ENCODE measurements at regions of chr17 and their contacts with region 1.

Region 1: DNA sequence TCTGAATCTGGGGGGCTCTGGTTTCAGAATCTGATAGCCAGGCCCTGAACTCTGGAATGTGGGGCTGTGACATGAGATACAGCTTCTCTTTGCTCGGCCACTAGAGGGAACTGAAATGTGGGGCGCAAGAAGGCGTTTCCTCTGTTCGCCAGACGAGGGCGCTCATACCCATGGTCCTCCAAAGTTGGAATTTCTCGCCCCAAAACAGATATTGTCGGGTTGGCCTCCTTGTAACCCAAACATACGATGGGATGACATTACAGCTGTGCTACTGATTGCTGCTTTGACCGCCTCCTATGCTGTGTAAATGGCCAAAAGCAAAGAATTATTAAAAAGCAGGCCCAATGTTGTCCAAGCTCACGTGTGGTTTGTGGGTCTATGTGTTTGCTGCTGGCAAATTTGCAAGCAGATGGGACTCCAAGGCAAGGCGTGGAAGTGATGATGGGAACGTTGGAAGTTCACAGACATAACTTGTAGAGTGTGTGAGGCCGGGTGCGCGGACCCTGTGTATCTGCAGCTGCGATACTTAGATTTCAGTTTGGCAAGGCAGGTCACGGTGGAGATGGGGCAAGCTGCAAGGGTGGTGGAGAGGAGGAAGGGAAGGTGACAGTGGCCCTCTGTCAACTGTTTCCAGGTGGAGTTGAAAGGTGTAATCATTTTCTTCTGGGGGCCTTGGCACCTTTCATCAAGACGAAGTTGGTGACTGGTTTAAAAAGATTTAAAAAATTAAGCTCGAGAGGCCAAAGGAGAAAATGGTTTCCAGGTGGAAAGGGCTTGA is 13.0 kb upstream of the MSI2 start:
- DNase-seq: peak; percentile 63 to 89 (median 70)
- ATAC-seq: peak; percentile 98
- H3K4me3 ChIP-seq: no peak overlapping the region
- H3K4me3 Mint-ChIP-seq: no peak overlapping the region
- H3K27ac ChIP-seq: no peak overlapping the region
- H3K27ac Mint-ChIP-seq: no peak overlapping the region
- H3K4me1 ChIP-seq: peaks cover 4% of the 10 kb centered on the region
- H3K4me1 Mint-ChIP-seq: no peaks in the 10 kb centered on the region
- H3K27me3 ChIP-seq: no peaks in the 10 kb centered on the region
- H3K27me3 Mint-ChIP-seq: peaks cover 4% of the 10 kb centered on the region
- CTCF ChIP-seq: peak; percentile 99

Region 2: GRCh38 chr17:57080441-57081080 is 162.8 kb before region 1 on chr17:
- CTCF ChIA-PET with region 1: no interaction called
- POLR2A ChIA-PET with region 1: no interaction called
- intact Hi-C with region 1: no loop called
- DNase-seq: no peak
- ATAC-seq: no peak
- H3K4me3 ChIP-seq: no peak overlapping the region
- H3K4me3 Mint-ChIP-seq: no peak overlapping the region
- H3K27ac ChIP-seq: no peak overlapping the region
- H3K27ac Mint-ChIP-seq: no peak overlapping the region
- H3K4me1 ChIP-seq: peaks cover 8% of the 10 kb centered on the region
- H3K4me1 Mint-ChIP-seq: peaks cover 5% of the 10 kb centered on the region
- H3K27me3 ChIP-seq: no peaks in the 10 kb centered on the region
- H3K27me3 Mint-ChIP-seq: no peaks in the 10 kb centered on the region
- CTCF ChIP-seq: no peak

Region 3: GRCh38 chr17:57158296-57158695 is 85.1 kb before region 1 on chr17:
- CTCF ChIA-PET with region 1: no interaction called
- POLR2A ChIA-PET with region 1: no interaction called
- intact Hi-C with region 1: no loop called
- DNase-seq: no peak
- ATAC-seq: no peak
- H3K4me3 ChIP-seq: no peak overlapping the region
- H3K4me3 Mint-ChIP-seq: no peak overlapping the region
- H3K27ac ChIP-seq: no peak overlapping the region
- H3K27ac Mint-ChIP-seq: no peak overlapping the region
- H3K4me1 ChIP-seq: no peaks in the 10 kb centered on the region
- H3K4me1 Mint-ChIP-seq: no peaks in the 10 kb centered on the region
- H3K27me3 ChIP-seq: no peaks in the 10 kb centered on the region
- H3K27me3 Mint-ChIP-seq: peaks cover 6% of the 10 kb centered on the region
- CTCF ChIP-seq: no peak

Region 4: GRCh38 chr17:57270801-57271245 is 27.5 kb after region 1 on chr17:
- CTCF ChIA-PET with region 1: interaction called, 10 read pairs
- POLR2A ChIA-PET with region 1: no interaction called
- intact Hi-C with region 1: no loop called
- DNase-seq: no peak
- ATAC-seq: no peak
- H3K4me3 ChIP-seq: no peak overlapping the region
- H3K4me3 Mint-ChIP-seq: no peak overlapping the region
- H3K27ac ChIP-seq: no peak overlapping the region
- H3K27ac Mint-ChIP-seq: no peak overlapping the region
- H3K4me1 ChIP-seq: peaks cover 11% of the 10 kb centered on the region
- H3K4me1 Mint-ChIP-seq: peaks cover 54% of the 10 kb centered on the region
- H3K27me3 ChIP-seq: no peaks in the 10 kb centered on the region
- H3K27me3 Mint-ChIP-seq: no peaks in the 10 kb centered on the region
- CTCF ChIP-seq: no peak

Region 5: GRCh38 chr17:57294629-57295535 is 51.5 kb after region 1 on chr17:
- CTCF ChIA-PET with region 1: interaction called, 12 read pairs
- POLR2A ChIA-PET with region 1: no interaction called
- intact Hi-C with region 1: no loop called
- DNase-seq: peak in 13 of 14 experiments; percentile 10 to 66 (median 41)
- ATAC-seq: peak; percentile 90
- H3K4me3 ChIP-seq: no peak overlapping the region
- H3K4me3 Mint-ChIP-seq: no peak overlapping the region
- H3K27ac ChIP-seq: no peak overlapping the region
- H3K27ac Mint-ChIP-seq: peak overlapping the region; percentile 5
- H3K4me1 ChIP-seq: peaks cover 7% of the 10 kb centered on the region
- H3K4me1 Mint-ChIP-seq: peaks cover 59% of the 10 kb centered on the region
- H3K27me3 ChIP-seq: no peaks in the 10 kb centered on the region
- H3K27me3 Mint-ChIP-seq: no peaks in the 10 kb centered on the region
- CTCF ChIP-seq: no peak

Region 6: GRCh38 chr17:57499648-57500049 is 256.3 kb after region 1 on chr17:
- CTCF ChIA-PET with region 1: interaction called, 3 read pairs
- POLR2A ChIA-PET with region 1: no interaction called
- intact Hi-C with region 1: loop called in 1 of 2 experiments (anchors 10 kb)
- DNase-seq: no peak
- ATAC-seq: no peak
- H3K4me3 ChIP-seq: no peak overlapping the region
- H3K4me3 Mint-ChIP-seq: no peak overlapping the region
- H3K27ac ChIP-seq: no peak overlapping the region
- H3K27ac Mint-ChIP-seq: no peak overlapping the region
- H3K4me1 ChIP-seq: peaks cover 10% of the 10 kb centered on the region
- H3K4me1 Mint-ChIP-seq: peaks cover 74% of the 10 kb centered on the region
- H3K27me3 ChIP-seq: no peaks in the 10 kb centered on the region
- H3K27me3 Mint-ChIP-seq: no peaks in the 10 kb centered on the region
- CTCF ChIP-seq: no peak

Region 7: GRCh38 chr17:57671667-57672632 is 428.6 kb after region 1 on chr17:
- CTCF ChIA-PET with region 1: interaction called, 7 read pairs
- POLR2A ChIA-PET with region 1: no interaction called
- intact Hi-C with region 1: loop called (anchors 1 to 2 kb)
- DNase-seq: peak; percentile 48 to 84 (median 62)
- ATAC-seq: peak; percentile 90
- H3K4me3 ChIP-seq: no peak overlapping the region
- H3K4me3 Mint-ChIP-seq: peak overlapping the region; percentile 48
- H3K27ac ChIP-seq: no peak overlapping the region
- H3K27ac Mint-ChIP-seq: peak overlapping the region; percentile 68
- H3K4me1 ChIP-seq: peaks cover 22% of the 10 kb centered on the region
- H3K4me1 Mint-ChIP-seq: peaks cover 11% of the 10 kb centered on the region
- H3K27me3 ChIP-seq: no peaks in the 10 kb centered on the region
- H3K27me3 Mint-ChIP-seq: no peaks in the 10 kb centered on the region
- CTCF ChIP-seq: peak; percentile 77

Region 8: DNA sequence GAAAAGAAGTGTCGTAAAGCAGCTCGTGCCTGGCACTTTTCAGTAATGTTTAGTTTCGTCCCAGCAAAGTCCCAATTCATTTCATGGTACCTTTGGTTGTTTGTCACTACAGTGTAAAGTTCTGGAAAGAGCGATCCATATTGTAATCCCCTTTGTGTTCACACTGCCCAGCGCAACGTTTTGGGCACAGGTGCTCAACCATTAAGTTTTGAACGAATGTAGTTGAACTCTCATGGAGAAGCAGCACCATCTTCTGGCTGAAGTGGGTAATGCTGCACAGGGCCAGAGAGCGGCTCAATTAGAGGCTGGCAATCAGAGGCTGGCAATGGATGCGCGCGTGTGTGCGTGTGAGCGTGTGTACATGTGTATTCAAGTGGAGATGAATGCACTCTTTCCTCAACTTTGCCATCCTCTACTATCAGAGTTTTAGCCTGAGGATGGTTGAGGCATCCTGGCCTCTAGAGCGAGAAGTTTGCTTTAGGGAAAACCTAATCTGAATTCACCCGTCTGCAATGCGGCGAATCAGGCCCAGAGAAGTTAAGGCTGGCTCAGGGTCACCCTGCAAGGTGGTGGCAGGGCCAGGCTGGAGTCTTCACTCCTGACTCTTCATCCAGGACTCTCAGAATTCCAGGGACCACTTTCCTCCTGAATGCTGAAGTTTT is 869.7 kb after region 1 on chr17:
- CTCF ChIA-PET with region 1: no interaction called
- POLR2A ChIA-PET with region 1: no interaction called
- intact Hi-C with region 1: loop called (anchors 5 kb)
- DNase-seq: peak; percentile 73 to 89 (median 86)
- ATAC-seq: peak; percentile 99
- H3K4me3 ChIP-seq: no peak overlapping the region
- H3K4me3 Mint-ChIP-seq: no peak overlapping the region
- H3K27ac ChIP-seq: no peak overlapping the region
- H3K27ac Mint-ChIP-seq: no peak overlapping the region
- H3K4me1 ChIP-seq: no peaks in the 10 kb centered on the region
- H3K4me1 Mint-ChIP-seq: no peaks in the 10 kb centered on the region
- H3K27me3 ChIP-seq: no peaks in the 10 kb centered on the region
- H3K27me3 Mint-ChIP-seq: peaks cover 4% of the 10 kb centered on the region
- CTCF ChIP-seq: peak; percentile 89

Measured in CD4-positive, alpha-beta T cell (primary cell).